Mammary epithelial cell (primary cell): ENCODE measurements at regions of chr19 and their contacts with region 1.

Region 1: DNA sequence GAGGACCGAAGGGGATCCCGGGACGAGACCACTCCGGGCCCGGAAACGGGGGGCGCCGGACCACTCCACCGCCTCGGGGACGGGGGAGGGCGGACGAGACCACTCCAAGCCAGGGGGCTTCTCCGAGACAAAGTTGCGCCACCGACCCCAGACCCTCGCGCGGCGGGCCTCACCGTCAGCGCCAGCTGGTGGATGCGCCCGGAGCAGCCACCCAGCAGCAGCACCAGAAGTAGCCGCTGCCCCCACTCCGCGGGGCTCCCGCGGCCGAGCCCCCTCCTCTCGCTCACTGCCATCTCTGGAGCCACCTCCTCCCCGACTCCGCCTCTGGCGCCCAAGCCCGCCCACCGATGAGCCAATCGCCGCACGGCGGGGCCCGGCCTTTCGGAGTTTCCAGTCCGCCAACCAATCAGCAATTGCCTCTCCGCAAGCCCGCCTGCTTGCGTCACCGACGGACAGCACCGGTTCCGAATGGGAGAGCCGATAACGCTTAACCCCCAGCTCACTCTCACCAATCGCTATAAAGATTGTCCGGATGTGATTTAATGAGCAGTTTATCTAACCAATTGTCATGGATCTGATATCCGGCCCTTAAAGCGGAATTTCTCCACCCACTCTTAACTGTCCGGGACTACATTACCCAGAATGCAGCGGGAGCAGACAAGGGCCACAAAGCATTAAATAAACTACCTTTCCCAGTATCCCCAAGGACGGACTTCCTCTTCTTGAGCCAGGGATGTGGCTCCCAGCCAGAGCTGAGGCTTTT is at the start of gene GPR108:
- DNase-seq: peak; percentile 100
- H3K4me3 ChIP-seq: peak within 1 kb of the TSS; percentile 74 to 99 (median 83)
- H3K27ac ChIP-seq: peak within 1 kb of the TSS; percentile 80
- H3K4me1 ChIP-seq: peaks cover 29% of the 10 kb centered on the region
- H3K27me3 ChIP-seq: no peaks in the 10 kb centered on the region
- CTCF ChIP-seq: no peak
- total RNA-seq, gene GPR108: 50.2 to 95.9 TPM

Region 2: GRCh38 chr19:6424939-6425731 is 312.3 kb before region 1 on chr19:
- CTCF ChIA-PET with region 1: no interaction called
- dilution Hi-C with region 1: no loop called
- in situ Hi-C with region 1: no loop called
- intact Hi-C with region 1: loop called (anchors 10 kb)
- DNase-seq: peak; percentile 100
- H3K4me3 ChIP-seq: peak overlapping the region; percentile 6 to 21 (median 7)
- H3K27ac ChIP-seq: peak overlapping the region; percentile 26
- H3K4me1 ChIP-seq: peaks cover 19% of the 10 kb centered on the region
- H3K27me3 ChIP-seq: no peaks in the 10 kb centered on the region
- CTCF ChIP-seq: no peak

Region 3: DNA sequence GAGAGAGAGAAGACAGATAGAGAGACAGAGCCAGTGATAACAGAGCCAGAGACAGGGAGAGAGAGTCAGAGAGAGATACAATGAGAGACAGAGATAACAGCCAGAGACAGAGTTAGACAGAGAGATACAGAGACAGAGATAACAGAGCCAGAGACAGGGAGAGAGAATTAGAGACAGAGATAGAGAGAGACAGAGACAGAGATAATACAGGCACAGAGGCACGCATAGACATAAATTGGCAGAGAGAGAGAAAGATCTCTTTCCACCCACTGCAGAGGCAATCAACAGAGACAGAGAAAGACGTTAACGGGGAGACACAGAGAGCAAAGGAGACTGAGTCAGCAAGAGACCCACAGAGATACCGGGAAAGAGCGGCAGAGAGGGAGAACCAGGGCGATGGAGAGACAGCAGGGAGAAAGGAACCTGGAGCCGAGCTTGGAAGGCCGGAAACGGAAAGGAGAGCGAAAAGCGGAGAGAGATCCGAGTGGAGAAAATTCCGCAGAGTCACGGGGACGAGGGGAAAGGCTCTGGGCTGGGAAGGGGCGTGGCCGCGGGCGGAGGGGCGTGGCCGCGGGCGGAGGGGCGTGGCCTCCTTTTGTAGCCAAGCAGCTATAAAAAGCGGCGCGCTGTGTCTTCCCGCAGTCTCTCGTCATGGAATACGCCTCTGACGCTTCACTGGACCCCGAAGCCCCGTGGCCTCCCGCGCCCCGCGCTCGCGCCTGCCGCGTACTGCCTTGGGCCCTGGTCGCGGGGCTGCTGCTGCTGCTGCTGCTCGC is 206.9 kb before region 1 on chr19 and contains the start of gene TNFSF9:
- CTCF ChIA-PET with region 1: no interaction called
- dilution Hi-C with region 1: no loop called
- in situ Hi-C with region 1: no loop called
- intact Hi-C with region 1: loop called (anchors 5 kb)
- DNase-seq: peak; percentile 87
- H3K4me3 ChIP-seq: peak within 1 kb of the TSS; percentile 63 to 88 (median 77)
- H3K27ac ChIP-seq: peak within 1 kb of the TSS; percentile 90
- H3K4me1 ChIP-seq: peaks cover 11% of the 10 kb centered on the region
- H3K27me3 ChIP-seq: no peaks in the 10 kb centered on the region
- CTCF ChIP-seq: no peak
- total RNA-seq, gene TNFSF9: 9.5 to 15.2 TPM

Region 4: DNA sequence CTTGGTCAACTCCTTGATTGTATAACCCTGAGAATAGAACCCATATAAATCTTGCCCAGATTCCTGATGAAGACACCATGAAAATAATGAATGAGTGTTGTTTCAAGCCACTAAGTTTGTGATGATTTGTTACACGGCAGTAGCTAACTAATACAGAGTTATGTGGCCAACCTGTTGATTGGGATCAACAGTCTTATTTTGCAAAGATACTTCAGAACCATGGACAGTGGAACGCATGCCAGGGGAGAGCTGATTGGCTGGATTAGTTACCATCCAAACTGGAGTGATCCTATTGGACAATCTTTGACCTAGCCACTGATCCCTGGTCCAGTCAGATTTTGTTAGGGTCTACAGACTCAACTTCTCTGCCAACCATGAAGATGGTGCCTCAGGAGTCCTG is 173.1 kb before region 1 on chr19:
- CTCF ChIA-PET with region 1: no interaction called
- dilution Hi-C with region 1: no loop called
- in situ Hi-C with region 1: no loop called
- intact Hi-C with region 1: loop called (anchors 5 kb)
- DNase-seq: peak; percentile 47
- H3K4me3 ChIP-seq: no peak overlapping the region
- H3K27ac ChIP-seq: no peak overlapping the region
- H3K4me1 ChIP-seq: no peaks in the 10 kb centered on the region
- H3K27me3 ChIP-seq: no peaks in the 10 kb centered on the region
- CTCF ChIP-seq: no peak

Region 5: DNA sequence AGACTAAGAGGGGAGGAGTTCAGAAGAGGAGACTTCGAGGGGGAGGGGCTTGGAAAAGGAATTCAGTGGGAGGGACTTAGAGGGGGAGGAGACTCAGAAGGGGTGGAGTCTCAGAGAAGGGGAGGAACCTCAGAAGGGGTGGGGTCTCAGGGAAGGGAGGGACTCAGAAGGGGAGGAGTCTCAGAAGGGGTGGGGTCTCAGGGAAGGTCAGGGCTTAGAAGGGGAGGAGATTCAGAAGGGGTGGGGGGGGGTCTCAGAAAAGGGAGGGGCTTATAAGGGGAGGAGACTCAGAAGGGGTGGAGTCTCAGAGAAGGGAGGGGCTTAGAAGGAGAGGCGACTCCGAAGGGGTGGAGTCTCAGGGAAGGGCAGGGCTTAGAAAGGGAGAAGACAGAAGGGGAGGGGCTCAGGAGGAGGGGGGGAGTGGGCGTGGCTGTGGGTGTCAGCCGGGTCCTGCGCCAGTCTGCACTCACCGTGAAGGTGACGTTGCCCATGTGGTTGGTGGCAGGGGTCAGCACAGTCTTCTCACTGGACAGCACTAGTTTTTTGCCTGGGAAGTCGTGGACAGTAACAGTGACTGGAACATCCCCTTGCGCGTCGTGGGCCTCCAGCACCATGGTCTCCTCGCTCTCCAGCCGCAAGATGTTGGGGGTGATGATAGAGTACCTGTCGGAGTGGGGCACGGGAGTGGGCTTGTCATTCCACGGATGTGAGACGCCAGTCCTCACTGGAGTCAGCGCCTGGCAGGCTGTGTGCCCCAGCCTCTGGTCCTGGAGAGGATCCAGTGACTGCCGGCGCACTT is 18.5 kb before region 1 on chr19:
- CTCF ChIA-PET with region 1: no interaction called
- dilution Hi-C with region 1: no loop called
- in situ Hi-C with region 1: no loop called
- intact Hi-C with region 1: loop called (anchors 2 kb)
- DNase-seq: peak; percentile 23
- H3K4me3 ChIP-seq: peak overlapping the region in 1 of 3 experiments; percentile 31
- H3K27ac ChIP-seq: no peak overlapping the region
- H3K4me1 ChIP-seq: peaks cover 35% of the 10 kb centered on the region
- H3K27me3 ChIP-seq: no peaks in the 10 kb centered on the region
- CTCF ChIP-seq: no peak

Region 6: DNA sequence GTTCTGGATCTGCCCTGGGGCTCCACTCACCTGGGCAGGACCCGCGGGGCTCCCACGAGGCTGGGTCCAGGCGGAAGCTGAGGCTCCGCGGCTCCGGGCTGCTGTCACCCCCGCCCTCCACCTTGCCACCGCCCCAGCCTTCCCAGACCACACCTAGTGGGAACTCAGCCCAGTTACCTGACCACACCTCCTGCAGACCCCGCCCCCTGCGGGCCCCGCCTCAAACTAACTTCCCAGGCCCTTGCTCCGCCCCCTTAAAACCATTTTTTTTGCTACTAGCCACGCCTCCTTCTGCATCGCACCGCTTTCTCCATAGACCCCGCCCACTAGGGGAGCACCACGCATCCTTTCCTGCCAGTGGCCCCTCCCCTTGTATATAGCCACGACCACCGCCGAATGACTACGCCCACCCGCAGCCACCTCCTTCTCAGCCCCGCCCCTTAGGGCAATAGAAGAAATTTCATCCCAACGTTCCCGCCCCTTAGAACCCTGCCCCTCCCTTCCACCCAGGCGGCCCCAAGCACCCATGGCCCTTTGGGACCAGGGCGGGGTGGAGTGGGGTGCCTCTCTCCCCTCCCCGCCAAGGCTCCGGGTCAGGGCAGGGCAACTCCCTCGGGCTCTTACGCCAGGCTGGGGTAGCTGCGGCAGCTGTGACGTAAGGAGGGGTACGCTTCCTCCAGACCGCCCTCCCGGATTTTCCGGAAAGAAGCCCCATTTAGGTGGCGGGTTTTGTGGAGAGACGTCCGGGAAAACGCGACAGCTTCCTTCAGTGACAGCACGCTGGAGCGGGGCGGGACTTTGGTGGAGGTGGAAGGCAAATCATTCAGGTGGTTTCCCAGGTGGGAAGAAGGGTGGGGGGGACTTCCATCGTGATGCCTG is 30.1 kb after region 1 on chr19 and contains the start of gene SH2D3A:
- CTCF ChIA-PET with region 1: interaction called, 4 read pairs
- dilution Hi-C with region 1: no loop called
- in situ Hi-C with region 1: no loop called
- intact Hi-C with region 1: loop called (anchors 1 kb)
- DNase-seq: peak; percentile 96
- H3K4me3 ChIP-seq: peak within 1 kb of the TSS; percentile 75 to 86 (median 81)
- H3K27ac ChIP-seq: peak within 1 kb of the TSS; percentile 94
- H3K4me1 ChIP-seq: peaks cover 16% of the 10 kb centered on the region
- H3K27me3 ChIP-seq: no peaks in the 10 kb centered on the region
- CTCF ChIP-seq: no peak
- total RNA-seq, gene SH2D3A: 59.0 to 95.1 TPM